ENCODE measurements at regions of chr3 and their contacts with region 1.

Region 1: GRCh38 chr3:197256836-197257444 is 41.5 kb downstream of the DLG1 start:
- DNase-seq: peak in 5 of 9 experiments; percentile 9 to 71 (median 35)
- ATAC-seq: no peak
- H3K4me3 ChIP-seq: no peak overlapping the region
- H3K4me3 Mint-ChIP-seq: no peak overlapping the region
- H3K27ac ChIP-seq: no peak overlapping the region
- H3K27ac Mint-ChIP-seq: no peak overlapping the region
- H3K4me1 ChIP-seq: peaks cover 19% of the 10 kb centered on the region
- H3K4me1 Mint-ChIP-seq: peaks cover 66% of the 10 kb centered on the region
- H3K27me3 ChIP-seq: no peaks in the 10 kb centered on the region
- H3K27me3 Mint-ChIP-seq: no peaks in the 10 kb centered on the region
- CTCF ChIP-seq: peak; percentile 88

Region 2: DNA sequence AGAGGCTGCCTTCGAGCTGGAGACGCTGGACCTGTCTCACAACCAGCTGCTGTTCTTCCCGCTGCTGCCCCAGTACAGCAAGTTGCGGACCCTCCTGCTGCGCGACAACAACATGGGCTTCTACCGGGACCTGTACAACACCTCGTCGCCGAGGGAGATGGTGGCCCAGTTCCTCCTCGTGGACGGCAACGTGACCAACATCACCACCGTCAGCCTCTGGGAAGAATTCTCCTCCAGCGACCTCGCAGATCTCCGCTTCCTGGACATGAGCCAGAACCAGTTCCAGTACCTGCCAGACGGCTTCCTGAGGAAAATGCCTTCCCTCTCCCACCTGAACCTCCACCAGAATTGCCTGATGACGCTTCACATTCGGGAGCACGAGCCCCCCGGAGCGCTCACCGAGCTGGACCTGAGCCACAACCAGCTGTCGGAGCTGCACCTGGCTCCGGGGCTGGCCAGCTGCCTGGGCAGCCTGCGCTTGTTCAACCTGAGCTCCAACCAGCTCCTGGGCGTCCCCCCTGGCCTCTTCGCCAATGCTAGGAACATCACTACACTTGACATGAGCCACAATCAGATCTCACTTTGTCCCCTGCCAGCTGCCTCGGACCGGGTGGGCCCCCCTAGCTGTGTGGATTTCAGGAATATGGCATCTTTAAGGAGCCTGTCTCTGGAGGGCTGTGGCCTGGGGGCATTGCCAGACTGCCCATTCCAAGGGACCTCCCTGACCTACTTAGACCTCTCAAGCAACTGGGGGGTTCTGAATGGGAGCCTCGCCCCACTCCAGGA is 596.4 kb before region 1 on chr3:
- CTCF ChIA-PET with region 1: no interaction called
- POLR2A ChIA-PET with region 1: no interaction called
- intact Hi-C with region 1: no loop called
- DNase-seq: no peak
- ATAC-seq: no peak
- H3K4me3 ChIP-seq: no peak overlapping the region
- H3K4me3 Mint-ChIP-seq: no peak overlapping the region
- H3K27ac ChIP-seq: no peak overlapping the region
- H3K27ac Mint-ChIP-seq: no peak overlapping the region
- H3K4me1 ChIP-seq: no peaks in the 10 kb centered on the region
- H3K4me1 Mint-ChIP-seq: no peaks in the 10 kb centered on the region
- H3K27me3 ChIP-seq: no peaks in the 10 kb centered on the region
- H3K27me3 Mint-ChIP-seq: no peaks in the 10 kb centered on the region
- CTCF ChIP-seq: no peak

Region 3: DNA sequence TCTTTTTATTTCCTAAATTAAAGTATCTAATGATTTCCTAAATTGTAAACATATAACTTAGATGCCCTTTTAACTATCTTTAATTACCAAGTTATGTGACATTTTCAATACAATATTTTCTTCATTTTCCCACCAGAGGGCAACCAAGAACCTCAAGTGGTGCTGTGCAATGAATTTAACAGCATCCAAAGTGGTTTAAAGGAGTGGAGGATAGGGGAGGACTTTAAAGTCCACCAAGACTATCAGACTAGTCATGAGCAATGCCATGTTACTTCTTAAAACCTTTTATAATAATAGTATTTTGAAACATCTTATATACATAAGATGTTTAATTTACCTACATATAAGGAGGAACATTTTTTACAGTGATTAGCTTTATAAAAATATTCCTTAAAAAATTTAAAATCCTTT is 32.9 kb before region 1 on chr3:
- CTCF ChIA-PET with region 1: interaction called, 11 read pairs
- POLR2A ChIA-PET with region 1: no interaction called
- intact Hi-C with region 1: no loop called
- DNase-seq: peak in 3 of 9 experiments; percentile 5 to 58 (median 45)
- ATAC-seq: peak; percentile 56
- H3K4me3 ChIP-seq: no peak overlapping the region
- H3K4me3 Mint-ChIP-seq: no peak overlapping the region
- H3K27ac ChIP-seq: no peak overlapping the region
- H3K27ac Mint-ChIP-seq: no peak overlapping the region
- H3K4me1 ChIP-seq: no peaks in the 10 kb centered on the region
- H3K4me1 Mint-ChIP-seq: peaks cover 52% of the 10 kb centered on the region
- H3K27me3 ChIP-seq: no peaks in the 10 kb centered on the region
- H3K27me3 Mint-ChIP-seq: no peaks in the 10 kb centered on the region
- CTCF ChIP-seq: peak; percentile 65

Region 4: DNA sequence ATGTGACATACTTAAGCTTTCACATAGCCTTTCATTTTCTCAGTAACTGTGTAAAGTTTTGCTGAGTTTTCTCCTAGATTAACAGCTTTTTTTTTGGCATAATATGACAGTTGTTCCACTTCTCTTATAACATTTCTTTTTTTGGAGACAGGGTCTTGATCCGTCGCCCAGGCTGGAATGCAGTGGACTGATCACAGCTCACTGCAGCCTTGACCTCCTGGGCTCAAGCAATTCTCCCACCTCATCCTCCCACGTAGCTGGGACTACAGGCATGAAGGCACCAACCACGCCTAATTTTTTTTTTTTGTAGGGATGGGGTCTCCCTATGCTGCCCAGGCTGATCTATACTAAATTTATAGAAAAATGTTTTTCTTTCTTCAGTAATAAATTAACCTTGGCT is 11.4 kb after region 1 on chr3:
- CTCF ChIA-PET with region 1: interaction called, 12 read pairs
- POLR2A ChIA-PET with region 1: interaction called, 3 read pairs
- intact Hi-C with region 1: no loop called
- DNase-seq: no peak
- ATAC-seq: no peak
- H3K4me3 ChIP-seq: no peak overlapping the region
- H3K4me3 Mint-ChIP-seq: no peak overlapping the region
- H3K27ac ChIP-seq: no peak overlapping the region
- H3K27ac Mint-ChIP-seq: no peak overlapping the region
- H3K4me1 ChIP-seq: no peaks in the 10 kb centered on the region
- H3K4me1 Mint-ChIP-seq: peaks cover 52% of the 10 kb centered on the region
- H3K27me3 ChIP-seq: no peaks in the 10 kb centered on the region
- H3K27me3 Mint-ChIP-seq: no peaks in the 10 kb centered on the region
- CTCF ChIP-seq: no peak

Region 5: DNA sequence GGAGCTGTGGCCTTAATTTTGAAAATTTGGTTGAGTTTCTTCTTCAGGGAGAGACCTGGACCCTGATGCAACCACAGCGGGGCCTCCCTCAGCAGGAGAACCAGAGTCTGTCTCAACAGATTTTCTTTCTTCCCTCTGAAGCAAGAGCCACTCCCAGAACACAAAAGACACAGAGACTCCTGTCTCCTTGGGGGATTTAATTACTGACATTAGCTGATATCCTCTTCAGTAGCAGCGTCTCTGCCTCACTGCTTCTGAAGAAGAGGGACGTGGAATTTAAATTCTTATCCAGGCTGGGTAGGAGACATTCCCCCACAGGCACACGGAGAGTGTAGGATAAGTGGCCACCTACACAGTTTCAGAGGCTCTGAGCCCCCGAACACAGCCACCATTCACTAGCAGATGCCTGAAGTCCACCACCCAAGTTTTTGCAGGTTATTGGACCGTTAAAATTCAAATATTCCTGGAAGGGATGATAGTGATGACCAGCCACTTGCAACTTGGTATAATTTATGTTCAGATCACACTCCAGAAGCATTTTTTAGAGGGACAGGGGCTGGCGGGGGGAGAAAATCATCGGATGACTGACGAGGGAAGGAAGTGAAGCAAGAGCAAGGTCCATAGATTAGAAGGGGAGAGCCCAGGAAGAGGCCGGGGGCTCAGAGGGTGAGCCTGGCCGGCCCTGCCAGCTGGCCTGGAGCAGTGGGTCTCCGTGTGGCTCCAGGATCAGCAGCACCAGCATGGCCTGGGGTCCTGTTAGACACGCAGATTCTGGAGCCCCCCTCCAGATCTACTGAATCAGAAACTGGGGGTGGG is 189.2 kb after region 1 on chr3:
- CTCF ChIA-PET with region 1: interaction called, 14 read pairs
- POLR2A ChIA-PET with region 1: no interaction called
- intact Hi-C with region 1: no loop called
- DNase-seq: no peak
- ATAC-seq: no peak
- H3K4me3 ChIP-seq: no peak overlapping the region
- H3K4me3 Mint-ChIP-seq: no peak overlapping the region
- H3K27ac ChIP-seq: no peak overlapping the region
- H3K27ac Mint-ChIP-seq: no peak overlapping the region
- H3K4me1 ChIP-seq: peaks cover 41% of the 10 kb centered on the region
- H3K4me1 Mint-ChIP-seq: peaks cover 34% of the 10 kb centered on the region
- H3K27me3 ChIP-seq: no peaks in the 10 kb centered on the region
- H3K27me3 Mint-ChIP-seq: peaks cover 6% of the 10 kb centered on the region
- CTCF ChIP-seq: no peak

Region 6: DNA sequence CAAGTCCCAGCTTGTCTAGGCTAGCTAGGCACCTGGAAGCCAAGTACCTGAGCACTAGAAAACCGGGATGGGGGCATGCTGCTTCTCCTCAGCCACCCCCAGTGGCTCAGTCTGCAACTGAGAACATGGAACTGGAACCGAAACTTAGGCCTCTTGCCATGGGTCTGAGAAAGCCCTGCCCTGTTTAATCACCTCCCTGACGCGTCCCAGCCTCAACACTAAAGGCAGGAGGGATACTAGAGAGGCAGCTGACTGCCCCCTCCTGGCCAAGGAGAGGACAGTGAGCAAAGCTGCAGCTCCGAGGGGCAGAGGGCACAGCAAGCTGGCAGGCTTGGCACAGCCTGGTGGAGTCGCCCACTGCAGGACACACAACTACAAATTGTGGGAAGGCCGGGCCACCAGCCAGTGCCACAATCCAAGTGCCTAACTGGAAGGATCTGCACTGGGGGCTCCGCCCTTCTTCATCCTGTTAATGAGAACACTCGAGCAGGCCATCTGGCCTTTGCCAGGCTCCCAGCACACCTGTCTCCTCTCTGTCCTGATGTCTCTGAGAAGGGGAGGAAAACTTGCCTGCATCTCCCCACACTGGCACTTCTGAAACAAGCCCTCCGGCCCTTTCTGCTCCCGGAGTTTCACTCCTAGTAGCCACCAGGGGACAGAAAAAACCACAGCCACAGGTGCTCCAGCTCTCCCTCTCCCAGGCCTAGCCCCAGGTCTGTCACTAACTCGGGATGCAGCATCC is 245.1 kb after region 1 on chr3:
- CTCF ChIA-PET with region 1: interaction called, 75 read pairs
- POLR2A ChIA-PET with region 1: interaction called, 3 read pairs
- intact Hi-C with region 1: no loop called
- DNase-seq: peak in 3 of 9 experiments; percentile 34 to 51 (median 36)
- ATAC-seq: no peak
- H3K4me3 ChIP-seq: no peak overlapping the region
- H3K4me3 Mint-ChIP-seq: no peak overlapping the region
- H3K27ac ChIP-seq: no peak overlapping the region
- H3K27ac Mint-ChIP-seq: no peak overlapping the region
- H3K4me1 ChIP-seq: no peaks in the 10 kb centered on the region
- H3K4me1 Mint-ChIP-seq: no peaks in the 10 kb centered on the region
- H3K27me3 ChIP-seq: no peaks in the 10 kb centered on the region
- H3K27me3 Mint-ChIP-seq: no peaks in the 10 kb centered on the region
- CTCF ChIP-seq: no peak

Region 7: GRCh38 chr3:197577366-197578074 is 320.6 kb after region 1 on chr3:
- CTCF ChIA-PET with region 1: no interaction called
- POLR2A ChIA-PET with region 1: no interaction called
- intact Hi-C with region 1: no loop called
- DNase-seq: no peak
- ATAC-seq: no peak
- H3K4me3 ChIP-seq: no peak overlapping the region
- H3K4me3 Mint-ChIP-seq: no peak overlapping the region
- H3K27ac ChIP-seq: no peak overlapping the region
- H3K27ac Mint-ChIP-seq: no peak overlapping the region
- H3K4me1 ChIP-seq: no peaks in the 10 kb centered on the region
- H3K4me1 Mint-ChIP-seq: no peaks in the 10 kb centered on the region
- H3K27me3 ChIP-seq: no peaks in the 10 kb centered on the region
- H3K27me3 Mint-ChIP-seq: peaks cover 4% of the 10 kb centered on the region
- CTCF ChIP-seq: no peak

Region 8: GRCh38 chr3:197667978-197668377 is 411.0 kb after region 1 on chr3:
- CTCF ChIA-PET with region 1: no interaction called
- POLR2A ChIA-PET with region 1: no interaction called
- intact Hi-C with region 1: no loop called
- DNase-seq: no peak
- ATAC-seq: no peak
- H3K4me3 ChIP-seq: no peak overlapping the region
- H3K4me3 Mint-ChIP-seq: no peak overlapping the region
- H3K27ac ChIP-seq: no peak overlapping the region
- H3K27ac Mint-ChIP-seq: no peak overlapping the region
- H3K4me1 ChIP-seq: no peaks in the 10 kb centered on the region
- H3K4me1 Mint-ChIP-seq: no peaks in the 10 kb centered on the region
- H3K27me3 ChIP-seq: no peaks in the 10 kb centered on the region
- H3K27me3 Mint-ChIP-seq: no peaks in the 10 kb centered on the region
- CTCF ChIP-seq: no peak